ENCODE measurements at regions of chr9 and their contacts with region 1.

Region 1: DNA sequence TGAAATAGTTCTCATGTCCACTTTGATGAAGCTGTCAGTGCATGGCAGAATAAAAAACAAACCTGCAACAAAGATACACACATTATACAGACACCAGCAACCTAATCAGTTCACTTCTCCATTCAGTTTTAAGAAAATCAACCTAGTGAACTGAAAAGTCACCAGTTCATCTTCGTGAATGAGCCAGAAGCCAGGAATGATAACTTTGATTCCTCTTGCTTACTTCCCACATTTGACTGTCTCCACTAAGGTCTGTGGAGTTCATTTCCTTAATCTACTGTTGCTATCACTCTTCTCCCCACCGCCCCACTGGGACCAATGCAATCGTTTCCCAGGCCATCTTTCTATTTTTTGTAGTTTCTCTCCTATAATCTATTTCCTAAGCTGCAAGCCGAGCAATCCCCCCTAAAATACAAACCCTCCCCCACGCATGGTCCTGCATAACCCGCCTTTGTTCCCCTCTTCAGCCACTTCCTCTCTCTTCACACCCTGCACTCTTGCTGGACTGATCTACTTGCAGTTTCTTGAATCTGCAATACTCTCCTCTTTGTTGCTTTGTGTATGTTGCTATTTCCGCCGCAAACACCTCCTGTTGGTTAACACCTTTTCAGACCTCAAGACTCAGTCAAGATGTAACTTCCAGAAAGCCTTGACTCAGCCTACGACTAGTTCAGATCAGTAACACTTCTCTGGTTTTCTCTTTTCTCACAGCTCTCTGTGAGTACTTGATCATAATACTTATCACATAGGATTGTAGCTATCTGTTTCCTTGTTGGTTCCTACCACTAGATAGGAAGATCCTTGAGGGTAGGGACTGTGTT is 16.6 kb downstream of the STOM start:
- DNase-seq: no peak
- ATAC-seq: peak; percentile 10
- H3K4me3 Mint-ChIP-seq: no peak overlapping the region
- H3K27ac Mint-ChIP-seq: no peak overlapping the region
- H3K4me1 Mint-ChIP-seq: peaks cover 8% of the 10 kb centered on the region
- H3K27me3 Mint-ChIP-seq: no peaks in the 10 kb centered on the region
- CTCF ChIP-seq: no peak

Region 2: GRCh38 chr9:120438836-120439546 is 914.5 kb before region 1 on chr9:
- CTCF ChIA-PET with region 1: no interaction called
- POLR2A ChIA-PET with region 1: no interaction called
- intact Hi-C with region 1: no loop called
- DNase-seq: no peak
- ATAC-seq: no peak
- H3K4me3 Mint-ChIP-seq: no peak overlapping the region
- H3K27ac Mint-ChIP-seq: no peak overlapping the region
- H3K4me1 Mint-ChIP-seq: peaks cover 10% of the 10 kb centered on the region
- H3K27me3 Mint-ChIP-seq: no peaks in the 10 kb centered on the region
- CTCF ChIP-seq: no peak

Region 3: GRCh38 chr9:121336665-121337064 is 16.8 kb before region 1 on chr9:
- CTCF ChIA-PET with region 1: no interaction called
- POLR2A ChIA-PET with region 1: no interaction called
- intact Hi-C with region 1: loop called (anchors 2 kb)
- DNase-seq: no peak
- ATAC-seq: no peak
- H3K4me3 Mint-ChIP-seq: no peak overlapping the region
- H3K27ac Mint-ChIP-seq: no peak overlapping the region
- H3K4me1 Mint-ChIP-seq: peaks cover 12% of the 10 kb centered on the region
- H3K27me3 Mint-ChIP-seq: no peaks in the 10 kb centered on the region
- CTCF ChIP-seq: no peak

Region 4: GRCh38 chr9:121424024-121424432 is 70.6 kb after region 1 on chr9:
- CTCF ChIA-PET with region 1: no interaction called
- POLR2A ChIA-PET with region 1: no interaction called
- intact Hi-C with region 1: no loop called
- DNase-seq: no peak
- ATAC-seq: no peak
- H3K4me3 Mint-ChIP-seq: no peak overlapping the region
- H3K27ac Mint-ChIP-seq: no peak overlapping the region
- H3K4me1 Mint-ChIP-seq: no peaks in the 10 kb centered on the region
- H3K27me3 Mint-ChIP-seq: no peaks in the 10 kb centered on the region
- CTCF ChIP-seq: no peak

Region 5: GRCh38 chr9:121445981-121446380 is 92.5 kb after region 1 on chr9:
- CTCF ChIA-PET with region 1: no interaction called
- POLR2A ChIA-PET with region 1: no interaction called
- intact Hi-C with region 1: no loop called
- DNase-seq: no peak
- ATAC-seq: no peak
- H3K4me3 Mint-ChIP-seq: no peak overlapping the region
- H3K27ac Mint-ChIP-seq: no peak overlapping the region
- H3K4me1 Mint-ChIP-seq: no peaks in the 10 kb centered on the region
- H3K27me3 Mint-ChIP-seq: peaks cover 16% of the 10 kb centered on the region
- CTCF ChIP-seq: no peak

Region 6: DNA sequence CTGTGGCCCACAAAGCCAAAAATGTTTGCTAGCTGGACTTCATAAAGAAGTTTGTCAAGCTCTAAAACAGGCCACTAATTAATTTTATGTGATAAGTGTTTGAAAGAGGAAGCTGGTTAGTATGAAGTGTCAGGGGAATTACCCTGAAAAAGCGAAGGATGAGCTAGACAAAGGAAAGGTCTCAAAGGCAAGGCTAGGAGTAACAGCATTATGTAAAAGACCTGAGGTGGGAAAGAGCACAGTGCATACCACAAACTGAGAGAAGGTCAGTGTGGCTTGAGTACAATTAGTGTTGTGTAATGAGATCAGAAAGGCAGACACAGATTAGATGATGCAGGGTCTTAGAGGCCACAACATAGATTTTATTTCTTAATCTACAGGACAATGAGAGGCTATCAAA is 1522.1 kb after region 1 on chr9:
- CTCF ChIA-PET with region 1: no interaction called
- POLR2A ChIA-PET with region 1: no interaction called
- intact Hi-C with region 1: no loop called
- DNase-seq: no peak
- ATAC-seq: peak; percentile 49
- H3K4me3 Mint-ChIP-seq: no peak overlapping the region
- H3K27ac Mint-ChIP-seq: peak overlapping the region; percentile 66
- H3K4me1 Mint-ChIP-seq: peaks cover 16% of the 10 kb centered on the region
- H3K27me3 Mint-ChIP-seq: no peaks in the 10 kb centered on the region
- CTCF ChIP-seq: no peak